ENCODE measurements at regions of chr14 and their contacts with region 1.

Region 1: DNA sequence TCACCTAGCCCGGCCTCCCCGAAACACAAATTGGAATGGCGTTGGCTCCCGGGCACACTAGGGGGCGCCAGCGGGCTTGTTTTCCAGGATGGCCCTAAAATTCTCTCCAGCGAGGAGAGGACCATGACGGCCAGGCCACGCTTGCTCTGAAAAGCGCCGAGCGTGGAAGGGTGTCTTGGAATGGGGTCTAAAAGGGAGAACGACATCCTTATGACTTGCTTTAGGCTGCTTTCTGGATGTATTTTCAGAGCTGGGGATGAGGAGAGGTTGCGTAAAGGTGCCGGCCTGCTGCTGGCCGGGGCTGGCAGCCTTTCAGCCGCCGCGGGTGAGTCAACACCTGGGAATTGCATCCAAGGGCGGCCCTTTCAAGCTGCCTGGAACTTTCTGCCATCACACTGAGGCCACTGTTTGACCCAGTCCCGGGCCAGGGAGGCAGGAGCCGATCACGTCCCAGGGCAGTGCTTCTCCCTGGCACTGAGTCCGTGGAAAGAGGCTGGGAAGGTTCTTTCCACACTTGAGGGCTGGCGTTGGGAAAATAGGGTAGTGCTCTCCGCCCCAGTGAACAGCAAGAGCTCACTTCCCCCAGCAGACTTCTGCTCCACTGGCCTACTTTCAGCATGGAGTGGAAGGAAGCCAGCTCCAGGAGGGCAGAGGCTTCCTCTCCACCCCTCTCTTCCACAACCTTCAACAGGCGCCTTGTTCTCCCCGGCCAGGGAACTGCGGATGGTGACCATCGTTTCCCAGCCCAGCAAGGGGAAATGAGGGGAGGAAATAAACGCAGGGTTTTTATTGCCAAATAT is 216.2 kb downstream of the TTC8 start:
- DNase-seq: peak; percentile 88 to 94
- ATAC-seq: peak; percentile 96 to 97
- H3K4me3 ChIP-seq: peak overlapping the region; percentile 38 to 72 (median 50)
- H3K27ac ChIP-seq: peak overlapping the region; percentile 77 to 89 (median 84)
- H3K4me1 ChIP-seq: peaks cover 9 to 21% of the 10 kb centered on the region in 2 donors
- H3K27me3 ChIP-seq: no peaks in the 10 kb centered on the region
- CTCF ChIP-seq: peak; percentile 91 to 97 (median 96)
- POLR2A ChIP-seq: no peak

Region 2: DNA sequence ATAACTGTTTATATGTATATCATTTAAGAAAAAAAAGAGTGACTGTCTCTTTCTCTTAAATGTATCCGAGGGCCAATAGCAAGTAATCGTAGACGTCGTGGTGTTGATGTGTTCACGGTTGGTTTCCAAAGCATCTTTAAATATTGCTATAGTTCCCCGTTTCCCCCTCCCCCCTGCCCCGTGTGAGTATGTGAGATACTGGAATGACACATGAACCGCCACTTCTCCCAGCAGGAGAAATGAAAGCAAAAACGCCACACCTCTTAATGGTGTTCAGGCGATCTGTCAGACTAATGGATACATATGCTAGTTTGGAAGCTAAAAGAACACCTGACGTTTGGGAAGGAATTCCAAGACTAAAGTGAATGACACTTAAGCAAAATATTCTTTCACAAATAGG is 118.0 kb after region 1 on chr14:
- in situ Hi-C with region 1: loop called in 1 of 4 experiments (anchors 10 kb)
- intact Hi-C with region 1: no loop called
- DNase-seq: no peak
- ATAC-seq: no peak
- H3K4me3 ChIP-seq: no peak overlapping the region
- H3K27ac ChIP-seq: no peak overlapping the region
- H3K4me1 ChIP-seq: no peaks in the 10 kb centered on the region
- H3K27me3 ChIP-seq: no peaks in the 10 kb centered on the region
- CTCF ChIP-seq: no peak
- POLR2A ChIP-seq: no peak

Region 3: GRCh38 chr14:89226801-89227495 is 186.3 kb after region 1 on chr14:
- in situ Hi-C with region 1: loop called in 1 of 4 experiments (anchors 25 kb)
- intact Hi-C with region 1: loop called (anchors 5 kb)
- DNase-seq: no peak
- ATAC-seq: no peak
- H3K4me3 ChIP-seq: no peak overlapping the region
- H3K27ac ChIP-seq: peak overlapping the region in 3 of 4 donors; percentile 20 to 90 (median 79)
- H3K4me1 ChIP-seq: peaks cover 40 to 56% of the 10 kb centered on the region in 2 donors
- H3K27me3 ChIP-seq: no peaks in the 10 kb centered on the region
- CTCF ChIP-seq: no peak
- POLR2A ChIP-seq: no peak

Region 4: GRCh38 chr14:89252887-89253547 is 212.4 kb after region 1 on chr14:
- in situ Hi-C with region 1: loop called in 1 of 4 experiments (anchors 25 kb)
- intact Hi-C with region 1: loop called (anchors 10 kb)
- DNase-seq: peak in 1 of 2 donors; percentile 36
- ATAC-seq: peak; percentile 37 to 39
- H3K4me3 ChIP-seq: no peak overlapping the region
- H3K27ac ChIP-seq: peak overlapping the region in 2 of 4 donors; percentile 41 to 50
- H3K4me1 ChIP-seq: peaks cover 55 to 65% of the 10 kb centered on the region in 2 donors
- H3K27me3 ChIP-seq: no peaks in the 10 kb centered on the region
- CTCF ChIP-seq: peak in 3 of 5 experiments; percentile 28 to 47 (median 30)
- POLR2A ChIP-seq: no peak

Region 5: GRCh38 chr14:89669193-89669592 is 628.5 kb after region 1 on chr14:
- in situ Hi-C with region 1: no loop called
- intact Hi-C with region 1: loop called (anchors 10 kb)
- DNase-seq: peak in 1 of 2 donors; percentile 14
- ATAC-seq: no peak
- H3K4me3 ChIP-seq: no peak overlapping the region
- H3K27ac ChIP-seq: no peak overlapping the region
- H3K4me1 ChIP-seq: no peaks in the 10 kb centered on the region
- H3K27me3 ChIP-seq: no peaks in the 10 kb centered on the region
- CTCF ChIP-seq: no peak
- POLR2A ChIP-seq: no peak

Region 6: GRCh38 chr14:89915114-89915878 is 874.6 kb after region 1 on chr14:
- in situ Hi-C with region 1: loop called in 1 of 4 experiments (anchors 5 kb)
- intact Hi-C with region 1: loop called (anchors 5 kb)
- DNase-seq: peak; percentile 19 to 40
- ATAC-seq: peak; percentile 73 to 74
- H3K4me3 ChIP-seq: no peak overlapping the region
- H3K27ac ChIP-seq: no peak overlapping the region
- H3K4me1 ChIP-seq: peaks cover 3 to 11% of the 10 kb centered on the region in 2 donors
- H3K27me3 ChIP-seq: no peaks in the 10 kb centered on the region
- CTCF ChIP-seq: peak; percentile 75 to 95 (median 92)
- POLR2A ChIP-seq: no peak